ENCODE measurements at regions of chr3 and their contacts with region 1.

Region 1: GRCh38 chr3:62873761-62874647 is 1.2 kb downstream of the CADPS start:
- DNase-seq: peak; percentile 13
- ATAC-seq: no peak
- H3K4me3 Mint-ChIP-seq: no peak overlapping the region
- H3K27ac Mint-ChIP-seq: no peak overlapping the region
- H3K4me1 Mint-ChIP-seq: no peaks in the 10 kb centered on the region
- H3K27me3 Mint-ChIP-seq: peaks cover 43% of the 10 kb centered on the region

Region 2: DNA sequence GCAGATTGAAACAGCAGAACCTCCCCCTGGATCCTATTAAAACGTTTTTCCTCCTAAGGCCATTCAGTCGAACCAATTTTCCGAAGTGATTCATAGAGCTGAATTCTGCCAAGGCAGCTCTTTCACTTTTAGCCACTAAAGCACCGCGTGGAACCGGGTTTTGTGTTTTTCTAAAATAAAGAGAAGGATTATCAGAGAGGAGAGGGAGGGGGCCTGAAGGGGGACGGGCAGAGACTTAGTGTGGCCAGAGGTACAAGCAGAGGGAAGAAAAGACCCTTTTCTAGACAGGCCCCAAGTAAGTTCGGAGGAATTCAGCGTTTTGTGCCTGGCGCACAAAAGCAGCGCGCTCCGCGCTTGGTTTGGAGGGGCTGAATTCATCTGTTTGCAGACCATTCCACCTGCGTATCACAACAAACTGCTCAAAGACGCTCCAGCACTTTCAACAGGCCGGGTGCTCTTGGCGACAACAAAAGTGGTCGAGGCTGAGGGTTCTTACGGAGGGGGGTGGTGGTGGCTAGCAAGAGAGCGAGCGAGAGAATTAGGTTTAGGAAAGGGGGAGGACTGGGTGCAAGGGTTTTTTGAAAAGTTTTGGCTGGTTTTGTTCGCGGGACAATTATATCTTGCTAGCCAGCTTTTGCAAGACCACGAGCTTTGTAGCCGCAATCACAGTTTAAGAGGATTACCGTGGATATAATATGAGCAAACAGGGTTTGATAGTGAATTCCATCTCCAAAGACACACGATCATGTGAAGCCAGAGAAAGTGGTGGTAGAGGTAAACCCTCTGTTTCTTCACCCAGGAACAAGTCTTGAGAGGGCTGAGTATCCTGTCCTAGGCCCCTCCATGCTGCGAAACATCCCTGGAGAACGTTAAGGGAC is 499.4 kb before region 1 on chr3:
- CTCF ChIA-PET with region 1: no interaction called
- POLR2A ChIA-PET with region 1: no interaction called
- intact Hi-C with region 1: loop called in 1 of 2 experiments (anchors 10 kb)
- DNase-seq: no peak
- ATAC-seq: no peak
- H3K4me3 Mint-ChIP-seq: no peak overlapping the region
- H3K27ac Mint-ChIP-seq: no peak overlapping the region
- H3K4me1 Mint-ChIP-seq: peaks cover 7% of the 10 kb centered on the region
- H3K27me3 Mint-ChIP-seq: peaks cover 68% of the 10 kb centered on the region

Region 3: GRCh38 chr3:62749657-62750056 is 124.3 kb before region 1 on chr3:
- CTCF ChIA-PET with region 1: no interaction called
- POLR2A ChIA-PET with region 1: no interaction called
- intact Hi-C with region 1: no loop called
- DNase-seq: no peak
- ATAC-seq: no peak
- H3K4me3 Mint-ChIP-seq: no peak overlapping the region
- H3K27ac Mint-ChIP-seq: no peak overlapping the region
- H3K4me1 Mint-ChIP-seq: no peaks in the 10 kb centered on the region
- H3K27me3 Mint-ChIP-seq: no peaks in the 10 kb centered on the region

Region 4: DNA sequence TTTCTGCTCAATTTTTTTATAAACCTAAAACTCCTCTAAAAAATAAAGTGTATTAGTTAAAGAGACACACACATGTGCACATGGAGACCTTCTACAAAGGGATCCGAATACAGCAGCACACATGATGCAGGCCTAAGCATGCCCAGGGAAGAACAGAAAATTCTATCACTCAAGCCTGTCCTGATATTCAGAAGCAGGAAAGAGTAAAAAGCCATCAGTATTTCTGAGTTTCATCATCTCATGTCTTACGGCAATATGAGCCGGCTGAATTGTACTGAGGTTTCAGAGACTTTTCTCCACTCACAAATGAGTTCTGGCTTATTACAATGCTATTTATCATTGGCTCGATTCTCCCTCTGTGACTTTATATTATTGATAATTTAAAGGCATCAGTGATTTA is 96.3 kb before region 1 on chr3:
- CTCF ChIA-PET with region 1: no interaction called
- POLR2A ChIA-PET with region 1: no interaction called
- intact Hi-C with region 1: loop called in 1 of 2 experiments (anchors 5 kb)
- DNase-seq: no peak
- ATAC-seq: no peak
- H3K4me3 Mint-ChIP-seq: no peak overlapping the region
- H3K27ac Mint-ChIP-seq: no peak overlapping the region
- H3K4me1 Mint-ChIP-seq: no peaks in the 10 kb centered on the region
- H3K27me3 Mint-ChIP-seq: no peaks in the 10 kb centered on the region

Measured in activated CD4-positive, alpha-beta T cell treated with anti-CD3 and anti-CD28 coated beads for 36 hours (primary cell).